ENCODE measurements at regions of chr2 and their contacts with region 1.

Region 1: DNA sequence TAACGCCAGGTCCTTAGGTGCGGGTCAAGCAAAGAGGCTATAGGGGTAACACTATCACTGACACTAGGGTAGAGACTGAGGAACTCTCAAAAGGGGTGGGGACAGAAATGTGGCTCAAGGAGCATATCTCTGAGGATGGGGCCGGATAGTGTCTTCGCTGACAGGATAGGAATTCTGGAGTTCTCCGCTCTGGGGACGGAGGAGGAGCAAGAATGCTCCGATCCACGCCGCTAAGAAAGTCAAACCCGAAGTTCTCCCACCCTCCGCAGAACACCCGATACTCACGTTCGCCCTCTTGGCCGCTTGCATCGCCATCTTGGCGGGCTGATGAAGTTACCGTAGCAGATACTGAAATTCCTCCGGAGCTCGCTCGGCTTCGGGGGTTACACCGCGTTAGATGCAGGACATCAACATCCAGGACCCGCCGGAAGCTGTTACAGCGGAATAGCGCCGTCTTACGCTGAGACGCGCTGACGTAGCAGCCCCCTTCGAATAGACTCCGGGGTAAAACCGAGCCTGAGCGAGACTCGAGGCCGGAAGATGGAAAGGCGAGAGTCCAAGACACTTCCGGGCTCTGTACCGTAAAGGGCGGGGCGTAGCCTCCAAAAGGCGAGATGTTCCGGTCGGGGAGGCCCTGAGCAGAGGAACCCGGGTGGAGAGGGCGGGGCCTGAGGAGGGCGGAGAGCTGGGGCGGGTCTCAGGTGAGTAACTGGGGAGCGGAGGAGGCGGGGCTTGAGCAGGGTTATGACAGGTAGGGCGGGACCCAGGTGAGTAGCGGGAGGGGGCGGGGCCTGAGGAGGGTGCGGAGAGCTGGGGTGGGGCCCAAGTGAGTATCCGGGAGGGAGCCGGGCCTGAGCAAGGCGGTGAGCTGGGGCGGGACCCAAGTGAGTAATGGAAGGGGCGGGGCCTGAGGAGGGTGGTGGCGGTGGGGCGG is at the start of gene SF3B6:
- DNase-seq: peak; percentile 96 to 98 (median 97)
- ATAC-seq: peak; percentile 97 to 98 (median 97)
- H3K4me3 ChIP-seq: peak within 1 kb of the TSS; percentile 33 to 95 (median 81)
- H3K27ac ChIP-seq: peak within 1 kb of the TSS; percentile 42 to 94 (median 87)
- H3K4me1 ChIP-seq: peaks cover 0 to 28% (median 15%) of the 10 kb centered on the region in 12 donors
- H3K27me3 ChIP-seq: no peaks in the 10 kb centered on the region
- CTCF ChIP-seq: peak in 1 of 12 donors; percentile 6
- POLR2A ChIP-seq: peak in 1 of 2 donors; percentile 61
- total RNA-seq, gene SF3B6: 49.7 to 89.6 (median 58.4) TPM

Region 2: GRCh38 chr2:23824777-23825212 is 251.4 kb before region 1 on chr2:
- intact Hi-C with region 1: loop called in 5 of 10 experiments (anchors 5 to 10 kb)
- DNase-seq: no peak
- ATAC-seq: peak in 2 of 4 donors; percentile 24 to 46
- H3K4me3 ChIP-seq: no peak overlapping the region
- H3K27ac ChIP-seq: no peak overlapping the region
- H3K4me1 ChIP-seq: peaks cover 0 to 12% (median 0%) of the 10 kb centered on the region in 12 donors
- H3K27me3 ChIP-seq: no peaks in the 10 kb centered on the region
- CTCF ChIP-seq: peak; percentile 53 to 76 (median 67)
- POLR2A ChIP-seq: no peak

Region 3: GRCh38 chr2:24046930-24047702 is 29.1 kb before region 1 on chr2 and contains the start of gene WDCP:
- intact Hi-C with region 1: loop called in 2 of 10 experiments (anchors 2 to 5 kb)
- DNase-seq: peak; percentile 93 to 97 (median 96)
- ATAC-seq: peak; percentile 99 to 100 (median 100)
- H3K4me3 ChIP-seq: peak within 1 kb of the TSS; percentile 52 to 87 (median 73)
- H3K27ac ChIP-seq: peak within 1 kb of the TSS in 10 of 12 donors; percentile 33 to 79 (median 68)
- H3K4me1 ChIP-seq: peaks cover 0 to 39% (median 19%) of the 10 kb centered on the region in 12 donors
- H3K27me3 ChIP-seq: no peaks in the 10 kb centered on the region
- CTCF ChIP-seq: no peak
- POLR2A ChIP-seq: peak in 1 of 2 donors; percentile 86
- total RNA-seq, gene WDCP: 4.9 to 9.8 (median 6.1) TPM

Measured in heart left ventricle (tissue), 16 donors.